ENCODE measurements at regions of chr19 and their contacts with region 1.

Region 1: DNA sequence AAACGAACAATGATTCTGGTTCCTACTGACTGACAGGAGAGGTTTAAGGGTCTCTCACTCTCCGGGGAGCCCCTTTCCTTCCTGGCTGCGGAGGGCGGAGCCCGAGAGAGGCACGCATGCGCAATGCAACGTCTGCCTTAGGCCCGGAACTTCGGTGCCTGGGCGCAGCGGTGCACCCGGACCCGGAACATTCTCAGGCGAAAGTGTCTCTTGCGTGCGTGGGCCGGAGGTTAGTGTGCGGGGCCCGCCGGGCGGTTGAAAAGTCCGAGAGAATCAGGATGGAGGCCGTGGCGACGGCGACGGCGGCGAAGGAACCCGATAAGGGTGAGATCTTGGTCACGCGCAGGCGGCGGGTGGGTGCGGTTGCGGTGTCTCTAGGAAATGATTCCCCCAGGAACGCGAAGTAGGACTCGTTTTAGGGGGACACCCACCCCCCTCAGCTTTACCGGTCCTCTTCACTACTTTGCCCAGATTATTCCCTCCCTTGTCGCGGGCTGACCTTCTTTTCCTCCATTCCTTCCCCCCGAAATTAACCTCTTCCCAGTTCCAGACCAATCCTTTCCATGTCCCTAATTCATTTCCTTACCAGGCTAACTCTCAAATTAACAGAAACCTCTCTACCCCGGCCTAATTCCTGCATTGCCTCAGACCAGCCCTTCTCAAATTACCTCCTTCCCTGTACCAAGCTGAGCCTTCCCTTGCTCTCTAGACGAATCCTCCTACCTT is at the start of gene CCDC97:
- DNase-seq: peak; percentile 90
- H3K4me3 Mint-ChIP-seq: peak within 1 kb of the TSS; percentile 95
- H3K27ac Mint-ChIP-seq: peak within 1 kb of the TSS; percentile 96
- H3K4me1 Mint-ChIP-seq: peaks cover 70% of the 10 kb centered on the region
- H3K27me3 Mint-ChIP-seq: no peaks in the 10 kb centered on the region
- total RNA-seq, gene CCDC97: 14.9 to 15.8 TPM

Region 2: DNA sequence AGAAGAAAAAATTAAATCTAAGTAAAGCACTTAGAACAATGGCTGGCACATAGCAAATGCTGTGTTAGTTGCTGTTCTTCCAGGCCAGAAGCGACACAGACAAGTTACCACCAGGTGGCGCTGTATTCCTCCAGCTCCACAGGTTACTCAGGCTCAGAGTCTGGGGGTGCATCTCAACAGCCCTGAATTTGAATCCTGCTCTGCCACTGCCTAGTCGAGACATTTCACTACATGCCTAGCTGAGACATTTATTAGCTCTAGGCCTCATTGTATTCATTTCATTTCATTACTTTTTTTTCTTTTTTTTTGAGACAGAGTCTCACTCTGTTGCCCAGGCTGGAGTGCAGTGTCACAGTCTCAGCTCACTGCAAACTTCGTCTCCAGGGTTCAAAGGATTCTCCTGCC is 335.6 kb before region 1 on chr19:
- CTCF ChIA-PET with region 1: no interaction called
- intact Hi-C with region 1: loop called (anchors 2 kb)
- DNase-seq: peak; percentile 90
- H3K4me3 Mint-ChIP-seq: no peak overlapping the region
- H3K27ac Mint-ChIP-seq: no peak overlapping the region
- H3K4me1 Mint-ChIP-seq: peaks cover 23% of the 10 kb centered on the region
- H3K27me3 Mint-ChIP-seq: peaks cover 4% of the 10 kb centered on the region

Region 3: DNA sequence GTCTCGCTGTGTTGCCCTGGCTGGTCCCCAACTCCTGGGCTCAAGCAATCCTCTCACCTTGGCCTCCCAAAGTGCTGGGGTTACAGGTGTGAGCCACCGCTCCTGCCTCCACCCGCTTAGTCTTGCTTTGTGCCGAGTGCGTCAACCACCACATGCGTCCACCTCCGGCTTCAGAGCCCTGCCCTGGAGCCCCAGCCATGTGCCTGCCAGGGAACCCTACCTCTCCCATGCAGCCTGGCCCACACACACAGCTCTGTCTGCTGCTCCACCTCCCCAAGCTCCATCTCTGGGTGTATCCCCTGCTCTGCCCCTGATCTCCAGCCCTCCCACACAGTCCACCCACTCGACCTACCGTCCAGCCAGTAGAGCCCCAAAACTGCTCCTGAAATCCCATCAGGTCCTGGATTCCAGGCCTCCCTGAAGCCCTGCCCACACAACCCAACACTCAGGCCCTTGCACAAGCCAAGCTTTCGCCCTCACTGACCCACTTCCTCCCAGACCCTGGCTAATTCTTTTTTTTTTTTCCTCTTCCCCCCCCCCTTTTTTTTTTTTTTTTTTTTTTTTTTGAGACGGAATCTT is 186.4 kb before region 1 on chr19:
- CTCF ChIA-PET with region 1: interaction called, 4 read pairs
- intact Hi-C with region 1: loop called (anchors 1 kb)
- DNase-seq: no peak
- H3K4me3 Mint-ChIP-seq: no peak overlapping the region
- H3K27ac Mint-ChIP-seq: no peak overlapping the region
- H3K4me1 Mint-ChIP-seq: peaks cover 27% of the 10 kb centered on the region
- H3K27me3 Mint-ChIP-seq: no peaks in the 10 kb centered on the region

Region 4: DNA sequence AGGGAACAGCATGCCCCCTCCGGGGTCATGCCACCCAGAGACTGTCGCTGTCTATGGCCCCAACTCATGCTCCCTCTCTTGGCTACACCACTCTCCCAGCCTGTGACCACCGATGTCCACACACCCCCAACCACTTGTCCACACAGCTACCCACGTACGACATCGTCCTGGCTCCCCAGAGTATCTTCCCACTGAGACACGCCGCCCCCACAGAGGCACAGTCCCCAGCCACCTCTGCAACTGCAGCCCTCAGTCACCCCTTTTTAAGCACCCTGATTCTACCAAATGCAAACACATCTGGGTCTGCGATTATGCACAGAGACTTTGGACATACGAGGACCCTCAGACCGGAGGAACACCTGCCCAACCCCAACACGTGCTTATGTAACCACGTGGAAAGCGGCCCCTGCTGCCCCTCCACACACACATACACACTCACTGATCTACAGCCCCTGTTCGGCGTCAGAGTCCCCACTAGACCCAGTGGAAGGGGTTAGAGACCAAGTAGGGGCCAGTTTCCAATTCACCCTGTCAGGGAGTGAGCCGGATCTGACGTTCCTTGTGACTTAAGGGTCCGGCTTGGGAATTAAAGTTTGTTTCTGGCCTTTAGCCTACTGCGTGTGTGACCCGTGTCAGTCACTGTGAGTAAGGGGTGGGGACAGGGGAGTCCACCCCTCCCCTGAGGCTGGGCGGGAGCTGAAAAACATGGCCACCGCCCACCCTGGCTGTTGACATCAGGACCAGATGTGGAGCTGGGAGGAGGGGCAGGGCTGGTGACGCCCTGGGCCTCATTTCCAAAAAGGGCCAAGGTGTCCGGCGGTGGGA is 103.1 kb before region 1 on chr19:
- CTCF ChIA-PET with region 1: interaction called, 9 read pairs
- intact Hi-C with region 1: loop called (anchors 1 kb)
- DNase-seq: no peak
- H3K4me3 Mint-ChIP-seq: no peak overlapping the region
- H3K27ac Mint-ChIP-seq: no peak overlapping the region
- H3K4me1 Mint-ChIP-seq: peaks cover 4% of the 10 kb centered on the region
- H3K27me3 Mint-ChIP-seq: no peaks in the 10 kb centered on the region

Region 5: DNA sequence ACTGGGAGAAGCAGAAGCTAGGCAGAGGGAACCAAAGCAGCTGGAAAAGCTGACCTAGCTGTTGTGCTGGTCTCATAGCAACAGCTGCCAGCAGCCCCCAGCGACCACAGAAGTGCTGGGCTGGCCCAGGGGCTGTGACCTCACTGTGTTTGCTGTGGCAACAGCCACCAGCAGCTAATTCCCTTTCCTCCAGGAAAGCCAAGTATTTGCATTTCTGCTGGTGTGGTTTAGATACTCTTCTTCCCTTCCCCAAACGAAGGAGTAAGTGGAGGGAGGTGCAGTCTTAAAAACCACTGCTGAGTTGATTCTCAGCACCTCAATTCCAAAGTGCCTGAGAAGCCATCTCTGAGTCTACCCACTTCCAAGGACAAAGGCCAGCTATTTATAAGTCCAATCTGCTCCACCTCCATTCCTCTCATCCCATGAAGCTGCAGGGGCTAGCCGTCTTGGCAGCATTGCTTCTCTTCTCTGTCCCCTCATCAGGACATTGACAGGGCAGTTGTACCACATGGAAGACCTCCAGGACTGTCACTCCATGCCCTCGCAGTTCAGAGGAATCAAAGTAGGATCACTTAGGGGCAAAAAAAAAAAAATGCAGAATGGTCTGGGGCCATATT is 11.7 kb before region 1 on chr19:
- CTCF ChIA-PET with region 1: interaction called, 11 read pairs
- intact Hi-C with region 1: no loop called
- DNase-seq: no peak
- H3K4me3 Mint-ChIP-seq: no peak overlapping the region
- H3K27ac Mint-ChIP-seq: peak overlapping the region; percentile 77
- H3K4me1 Mint-ChIP-seq: peaks cover 87% of the 10 kb centered on the region
- H3K27me3 Mint-ChIP-seq: no peaks in the 10 kb centered on the region

Region 6: GRCh38 chr19:41327576-41328156 is 17.5 kb after region 1 on chr19:
- CTCF ChIA-PET with region 1: interaction called, 8 read pairs
- intact Hi-C with region 1: loop called (anchors 1 kb)
- DNase-seq: peak; percentile 80
- H3K4me3 Mint-ChIP-seq: peak overlapping the region; percentile 67
- H3K27ac Mint-ChIP-seq: peak overlapping the region; percentile 93
- H3K4me1 Mint-ChIP-seq: peaks cover 55% of the 10 kb centered on the region
- H3K27me3 Mint-ChIP-seq: no peaks in the 10 kb centered on the region

Region 7: GRCh38 chr19:41439441-41440222 is 129.4 kb after region 1 on chr19 and contains the start of gene DMAC2:
- CTCF ChIA-PET with region 1: no interaction called
- intact Hi-C with region 1: loop called (anchors 2 kb)
- DNase-seq: peak; percentile 99
- H3K4me3 Mint-ChIP-seq: no peak within 1 kb of the TSS
- H3K27ac Mint-ChIP-seq: no peak within 1 kb of the TSS
- H3K4me1 Mint-ChIP-seq: peaks cover 13% of the 10 kb centered on the region
- H3K27me3 Mint-ChIP-seq: no peaks in the 10 kb centered on the region
- total RNA-seq, gene DMAC2: 51.5 to 53.8 TPM

Measured in activated naive CD4-positive, alpha-beta T cell treated with anti-CD3 and anti-CD28 coated beads for 36 hours (primary cell).